MCF 10A (cell line): ENCODE measurements at regions of chr7 and their contacts with region 1.

Region 1: GRCh38 chr7:35519971-35520809 is 174.7 kb downstream of the HERPUD2 start:
- DNase-seq: peak; percentile 84
- H3K4me3 Mint-ChIP-seq: no peak overlapping the region
- H3K27ac Mint-ChIP-seq: no peak overlapping the region
- H3K4me1 Mint-ChIP-seq: no peaks in the 10 kb centered on the region
- H3K27me3 Mint-ChIP-seq: peaks cover 62% of the 10 kb centered on the region
- CTCF ChIP-seq: peak; percentile 83

Region 2: GRCh38 chr7:35430547-35431153 is 89.5 kb before region 1 on chr7:
- CTCF ChIA-PET with region 1: interaction called, 49 read pairs
- POLR2A ChIA-PET with region 1: no interaction called
- intact Hi-C with region 1: loop called (anchors 1 kb)
- DNase-seq: peak; percentile 39
- H3K4me3 Mint-ChIP-seq: no peak overlapping the region
- H3K27ac Mint-ChIP-seq: no peak overlapping the region
- H3K4me1 Mint-ChIP-seq: no peaks in the 10 kb centered on the region
- H3K27me3 Mint-ChIP-seq: peaks cover 34% of the 10 kb centered on the region
- CTCF ChIP-seq: peak; percentile 26

Region 3: DNA sequence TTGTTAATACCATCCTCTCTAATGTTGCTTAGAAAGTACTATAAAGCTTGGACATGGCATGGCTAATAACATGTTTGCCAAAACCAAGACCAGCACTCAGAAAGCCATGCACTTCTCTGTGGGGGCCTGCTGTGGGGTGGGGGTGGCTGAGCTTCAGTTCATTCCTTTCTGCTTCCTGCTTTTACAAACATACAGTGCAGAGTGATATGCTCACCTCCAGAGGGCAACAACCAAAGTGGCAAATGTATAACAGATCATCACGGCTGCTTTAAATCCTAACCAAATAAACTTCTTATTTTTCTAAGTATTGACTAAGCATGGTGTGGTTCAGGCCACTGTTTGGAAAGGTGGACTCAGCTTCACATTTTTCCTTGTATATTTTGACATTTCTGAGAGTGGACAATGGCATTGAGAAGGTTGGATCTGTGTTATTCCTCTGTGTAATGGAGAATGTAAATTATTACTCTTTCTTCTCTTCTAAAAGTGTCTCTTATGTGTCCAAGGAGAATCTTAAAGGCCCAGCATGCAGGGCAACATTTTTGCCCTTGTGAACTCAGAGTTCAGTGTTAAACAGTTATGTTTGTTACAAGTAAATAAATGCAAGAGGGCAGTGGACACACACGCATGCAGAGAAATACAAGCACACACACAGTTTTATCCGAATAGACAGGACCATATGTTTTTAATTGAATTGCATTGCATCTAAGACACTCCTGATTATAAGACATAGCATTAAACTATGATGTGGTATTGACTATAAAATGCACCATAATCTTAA is 11.4 kb before region 1 on chr7:
- CTCF ChIA-PET with region 1: interaction called, 22 read pairs
- POLR2A ChIA-PET with region 1: no interaction called
- intact Hi-C with region 1: no loop called
- DNase-seq: no peak
- H3K4me3 Mint-ChIP-seq: no peak overlapping the region
- H3K27ac Mint-ChIP-seq: no peak overlapping the region
- H3K4me1 Mint-ChIP-seq: no peaks in the 10 kb centered on the region
- H3K27me3 Mint-ChIP-seq: peaks cover 26% of the 10 kb centered on the region
- CTCF ChIP-seq: no peak

Region 4: GRCh38 chr7:35537067-35538023 is 17.2 kb after region 1 on chr7:
- CTCF ChIA-PET with region 1: interaction called, 11 read pairs
- POLR2A ChIA-PET with region 1: no interaction called
- intact Hi-C with region 1: no loop called
- DNase-seq: peak; percentile 71
- H3K4me3 Mint-ChIP-seq: peak overlapping the region; percentile 60
- H3K27ac Mint-ChIP-seq: no peak overlapping the region
- H3K4me1 Mint-ChIP-seq: no peaks in the 10 kb centered on the region
- H3K27me3 Mint-ChIP-seq: peaks cover 34% of the 10 kb centered on the region
- CTCF ChIP-seq: peak; percentile 87

Region 5: GRCh38 chr7:35691827-35692307 is 171.7 kb after region 1 on chr7:
- CTCF ChIA-PET with region 1: no interaction called
- POLR2A ChIA-PET with region 1: no interaction called
- intact Hi-C with region 1: no loop called
- DNase-seq: no peak
- H3K4me3 Mint-ChIP-seq: peak overlapping the region; percentile 93
- H3K27ac Mint-ChIP-seq: peak overlapping the region; percentile 29
- H3K4me1 Mint-ChIP-seq: peaks cover 39% of the 10 kb centered on the region
- H3K27me3 Mint-ChIP-seq: no peaks in the 10 kb centered on the region
- CTCF ChIP-seq: no peak

Region 6: DNA sequence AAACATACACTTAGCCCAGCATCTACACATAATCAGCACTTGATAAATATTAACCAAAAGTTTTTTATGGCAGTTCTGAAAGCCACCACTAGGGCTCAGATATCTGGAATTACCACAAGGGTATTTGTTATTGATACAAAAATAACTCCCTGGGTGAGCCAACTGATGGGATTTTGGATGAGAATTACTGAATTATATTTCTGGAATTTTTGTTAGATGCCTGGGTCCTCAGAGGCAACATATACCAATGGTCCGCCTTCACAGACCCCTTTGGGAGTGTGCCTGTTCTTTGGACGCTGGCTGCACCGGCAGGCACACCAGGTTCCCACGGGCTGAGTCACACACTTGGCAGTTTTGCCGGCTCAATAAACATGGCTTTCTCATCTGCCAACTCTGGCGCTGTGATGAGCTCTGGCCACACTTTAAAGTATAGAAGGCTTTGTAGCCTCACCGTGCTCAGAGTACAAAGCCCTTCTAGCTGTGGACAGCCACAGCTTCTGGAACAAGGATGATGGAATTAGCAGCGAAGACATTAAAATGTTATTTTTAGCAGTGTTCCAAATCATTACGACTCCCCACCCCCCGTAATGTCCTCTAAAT is 608.4 kb after region 1 on chr7:
- CTCF ChIA-PET with region 1: no interaction called
- POLR2A ChIA-PET with region 1: no interaction called
- intact Hi-C with region 1: no loop called
- DNase-seq: peak; percentile 96
- H3K4me3 Mint-ChIP-seq: peak overlapping the region; percentile 64
- H3K27ac Mint-ChIP-seq: peak overlapping the region; percentile 75
- H3K4me1 Mint-ChIP-seq: peaks cover 23% of the 10 kb centered on the region
- H3K27me3 Mint-ChIP-seq: peaks cover 23% of the 10 kb centered on the region
- CTCF ChIP-seq: peak; percentile 63